Common myeloid progenitor, CD34-positive (primary cell): ENCODE measurements at regions of chr2 and their contacts with region 1.

Region 1: GRCh38 chr2:10141736-10142642 is 19.4 kb downstream of the RRM2 start:
- DNase-seq: peak in 1 of 3 donors; percentile 29
- H3K4me3 ChIP-seq: no peak overlapping the region
- H3K27ac ChIP-seq: no peak overlapping the region
- H3K4me1 ChIP-seq: peaks cover 0 to 5% (median 0%) of the 10 kb centered on the region in 4 experiments
- H3K27me3 ChIP-seq: no peaks in the 10 kb centered on the region

Region 2: DNA sequence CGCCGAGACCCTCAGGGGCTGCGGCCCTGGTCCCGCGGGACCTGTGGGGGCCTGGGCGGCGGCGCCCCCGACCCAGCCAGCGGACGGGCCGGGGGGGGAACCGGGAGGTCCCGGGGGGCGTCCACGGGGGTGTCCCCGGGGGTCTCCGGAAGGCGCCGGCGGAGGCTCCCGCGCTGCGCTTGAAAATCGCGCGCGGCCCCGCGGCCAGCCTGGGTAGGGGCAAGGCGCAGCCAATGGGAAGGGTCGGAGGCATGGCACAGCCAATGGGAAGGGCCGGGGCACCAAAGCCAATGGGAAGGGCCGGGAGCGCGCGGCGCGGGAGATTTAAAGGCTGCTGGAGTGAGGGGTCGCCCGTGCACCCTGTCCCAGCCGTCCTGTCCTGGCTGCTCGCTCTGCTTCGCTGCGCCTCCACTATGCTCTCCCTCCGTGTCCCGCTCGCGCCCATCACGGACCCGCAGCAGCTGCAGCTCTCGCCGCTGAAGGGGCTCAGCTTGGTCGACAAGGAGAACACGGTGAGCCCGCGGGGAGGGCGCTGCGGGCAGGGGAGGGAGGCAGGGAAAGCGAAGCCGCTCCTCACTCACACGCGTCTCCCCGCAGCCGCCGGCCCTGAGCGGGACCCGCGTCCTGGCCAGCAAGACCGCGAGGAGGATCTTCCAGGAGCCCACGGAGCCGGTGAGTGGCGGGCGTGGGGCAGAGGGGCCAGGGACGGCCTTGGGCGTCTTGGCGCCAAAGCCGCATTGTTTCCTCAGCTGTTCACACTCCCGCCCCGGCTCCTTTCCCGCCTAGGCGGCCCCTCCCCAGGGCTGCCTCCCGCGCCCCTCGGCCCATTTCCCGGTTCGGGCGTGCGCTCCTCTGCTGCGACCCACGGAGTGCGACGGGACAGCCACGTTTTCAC is 19.4 kb before region 1 on chr2 and contains the start of gene RRM2:
- CTCF ChIA-PET with region 1: interaction called, 28 read pairs
- POLR2A ChIA-PET with region 1: no interaction called
- DNase-seq: peak; percentile 85 to 94 (median 93)
- H3K4me3 ChIP-seq: peak within 1 kb of the TSS; percentile 54 to 94 (median 82)
- H3K27ac ChIP-seq: peak within 1 kb of the TSS in 1 of 2 experiments; percentile 77
- H3K4me1 ChIP-seq: peaks cover 12 to 66% (median 48%) of the 10 kb centered on the region in 4 experiments
- H3K27me3 ChIP-seq: no peaks in the 10 kb centered on the region

Region 3: GRCh38 chr2:10129490-10129889 is 12.5 kb before region 1 on chr2:
- CTCF ChIA-PET with region 1: interaction called, 28 read pairs
- POLR2A ChIA-PET with region 1: no interaction called
- DNase-seq: no peak
- H3K4me3 ChIP-seq: no peak overlapping the region
- H3K27ac ChIP-seq: no peak overlapping the region
- H3K4me1 ChIP-seq: peaks cover 0 to 9% (median 5%) of the 10 kb centered on the region in 4 experiments
- H3K27me3 ChIP-seq: no peaks in the 10 kb centered on the region